ENCODE measurements at regions of chr4 and their contacts with region 1.

Region 1: DNA sequence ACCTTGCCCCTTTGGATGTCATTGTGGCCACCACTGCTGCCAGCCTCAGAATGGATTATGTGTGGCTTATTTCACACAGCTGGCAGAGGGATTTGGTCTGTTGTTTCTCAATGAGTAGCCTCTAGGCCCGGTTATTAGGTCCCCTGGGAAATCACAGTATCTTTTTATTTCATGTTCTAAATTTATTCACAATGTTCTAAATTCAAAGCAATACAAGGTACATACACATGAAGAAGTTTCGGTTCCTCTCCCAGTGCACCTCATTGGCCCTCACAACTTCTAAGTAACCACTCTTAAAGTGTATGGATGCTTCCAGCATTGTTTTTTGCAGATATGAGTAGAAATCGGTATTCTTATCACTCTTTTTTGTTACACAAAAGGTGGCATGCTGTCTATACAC is 262.7 kb downstream of the RCHY1 start:
- DNase-seq: no peak
- H3K4me3 ChIP-seq: no peak overlapping the region
- H3K27ac ChIP-seq: no peak overlapping the region
- H3K4me1 ChIP-seq: no peaks in the 10 kb centered on the region
- H3K27me3 ChIP-seq: no peaks in the 10 kb centered on the region
- CTCF ChIP-seq: no peak
- POLR2A ChIP-seq: no peak

Region 2: GRCh38 chr4:74919783-74920182 is 331.8 kb before region 1 on chr4:
- intact Hi-C with region 1: no loop called
- DNase-seq: no peak
- H3K4me3 ChIP-seq: no peak overlapping the region
- H3K27ac ChIP-seq: no peak overlapping the region
- H3K4me1 ChIP-seq: no peaks in the 10 kb centered on the region
- H3K27me3 ChIP-seq: no peaks in the 10 kb centered on the region
- CTCF ChIP-seq: no peak
- POLR2A ChIP-seq: no peak

Region 3: GRCh38 chr4:75048208-75048879 is 203.2 kb before region 1 on chr4:
- intact Hi-C with region 1: loop called (anchors 10 kb)
- DNase-seq: no peak
- H3K4me3 ChIP-seq: no peak overlapping the region
- H3K27ac ChIP-seq: no peak overlapping the region
- H3K4me1 ChIP-seq: no peaks in the 10 kb centered on the region
- H3K27me3 ChIP-seq: no peaks in the 10 kb centered on the region
- CTCF ChIP-seq: no peak
- POLR2A ChIP-seq: no peak

Region 4: GRCh38 chr4:75338352-75338880 is 86.9 kb after region 1 on chr4:
- intact Hi-C with region 1: loop called (anchors 10 kb)
- DNase-seq: no peak
- H3K4me3 ChIP-seq: no peak overlapping the region
- H3K27ac ChIP-seq: no peak overlapping the region
- H3K4me1 ChIP-seq: no peaks in the 10 kb centered on the region
- H3K27me3 ChIP-seq: no peaks in the 10 kb centered on the region
- CTCF ChIP-seq: no peak
- POLR2A ChIP-seq: no peak

Region 5: GRCh38 chr4:75514131-75514948 is 262.8 kb after region 1 on chr4 and contains the starts of genes RCHY1 and THAP6:
- intact Hi-C with region 1: no loop called
- DNase-seq: peak; percentile 95
- H3K4me3 ChIP-seq: peak within 1 kb of the TSS; percentile 70 to 75
- H3K27ac ChIP-seq: peak within 1 kb of the TSS; percentile 97 to 98
- H3K4me1 ChIP-seq: no peaks in the 10 kb centered on the region
- H3K27me3 ChIP-seq: no peaks in the 10 kb centered on the region
- CTCF ChIP-seq: peak in 2 of 4 experiments; percentile 26 to 41
- POLR2A ChIP-seq: peak; percentile 74
- total RNA-seq, gene RCHY1: 18.7 to 23.3 TPM
- total RNA-seq, gene THAP6: 20.7 to 24.1 TPM

Measured in prostate gland (tissue), 2 donors.